ENCODE measurements at regions of chr14 and their contacts with region 1.

Region 1: DNA sequence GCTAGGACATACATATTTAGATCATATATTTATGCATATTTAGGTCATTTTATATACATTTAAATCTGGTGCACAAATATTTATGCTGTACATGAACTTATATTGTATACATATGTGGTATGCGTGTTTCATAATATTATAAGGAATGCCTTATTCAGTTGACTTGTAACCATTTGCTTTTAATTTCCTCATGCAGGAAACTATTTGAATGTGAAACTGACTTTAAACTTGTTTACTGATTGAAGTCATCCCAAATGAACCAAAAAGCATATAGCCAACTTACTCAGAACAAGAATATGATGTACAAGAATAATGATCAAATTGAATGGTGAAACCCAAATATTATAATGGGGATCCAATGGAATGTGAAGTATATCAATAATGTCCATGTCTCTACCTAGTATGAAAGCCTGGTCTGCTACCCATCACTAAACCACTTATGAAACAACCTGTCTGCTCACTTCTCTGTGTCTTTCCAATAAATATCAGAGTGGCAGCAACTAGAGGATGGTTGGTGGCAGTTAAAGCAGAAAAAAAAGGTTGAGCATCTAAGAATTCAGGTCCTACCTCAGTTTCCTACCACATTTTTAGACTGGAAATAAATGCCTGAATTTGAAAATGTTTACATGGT is 38.3 kb downstream of the RPS6KA5 start:
- DNase-seq: no peak
- ATAC-seq: peak in 3 of 4 experiments; percentile 8 to 59 (median 51)
- H3K4me3 ChIP-seq: peak overlapping the region in 1 of 2 donors; percentile 55
- H3K4me3 Mint-ChIP-seq: peak overlapping the region; percentile 72 to 80 (median 76)
- H3K27ac ChIP-seq: peak overlapping the region; percentile 91
- H3K27ac Mint-ChIP-seq: peak overlapping the region; percentile 96 to 97
- H3K4me1 ChIP-seq: peaks cover 4 to 16% of the 10 kb centered on the region in 2 experiments
- H3K4me1 Mint-ChIP-seq: peaks cover 45 to 70% (median 67%) of the 10 kb centered on the region in 3 donors
- H3K27me3 ChIP-seq: no peaks in the 10 kb centered on the region
- H3K27me3 Mint-ChIP-seq: no peaks in the 10 kb centered on the region

Region 2: DNA sequence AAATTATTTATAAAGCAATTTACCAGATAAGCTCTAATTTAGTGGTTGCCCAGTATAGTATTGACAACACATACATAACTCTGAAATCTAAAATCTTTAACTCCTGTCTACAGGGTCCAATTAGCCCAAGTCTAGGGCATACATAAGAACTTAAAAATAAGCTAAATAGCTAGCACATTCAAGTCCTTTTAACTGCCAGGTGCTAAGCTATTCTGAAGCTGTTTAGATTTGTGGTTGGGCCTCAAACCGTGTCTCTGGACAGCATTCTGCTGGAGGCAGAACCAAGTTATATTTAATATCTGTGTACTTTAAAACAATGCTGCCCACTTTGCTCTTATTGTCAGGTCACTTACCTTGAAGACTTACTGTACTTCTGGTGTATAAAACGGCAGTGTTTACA is 19.3 kb after region 1 on chr14:
- CTCF ChIA-PET with region 1: no interaction called
- POLR2A ChIA-PET with region 1: interaction called in 1 of 2 experiments, 18 read pairs
- DNase-seq: no peak
- ATAC-seq: no peak
- H3K4me3 ChIP-seq: no peak overlapping the region
- H3K4me3 Mint-ChIP-seq: no peak overlapping the region
- H3K27ac ChIP-seq: no peak overlapping the region
- H3K27ac Mint-ChIP-seq: no peak overlapping the region
- H3K4me1 ChIP-seq: peaks cover 0 to 5% of the 10 kb centered on the region in 2 experiments
- H3K4me1 Mint-ChIP-seq: peaks cover 54 to 64% (median 62%) of the 10 kb centered on the region in 3 donors
- H3K27me3 ChIP-seq: no peaks in the 10 kb centered on the region
- H3K27me3 Mint-ChIP-seq: no peaks in the 10 kb centered on the region

Region 3: GRCh38 chr14:91286530-91286937 is 264.4 kb after region 1 on chr14:
- CTCF ChIA-PET with region 1: no interaction called
- POLR2A ChIA-PET with region 1: no interaction called
- DNase-seq: peak; percentile 36 to 87 (median 75)
- ATAC-seq: peak; percentile 56 to 78 (median 76)
- H3K4me3 ChIP-seq: no peak overlapping the region
- H3K4me3 Mint-ChIP-seq: no peak overlapping the region
- H3K27ac ChIP-seq: no peak overlapping the region
- H3K27ac Mint-ChIP-seq: peak overlapping the region; percentile 40 to 71
- H3K4me1 ChIP-seq: peaks cover 0 to 9% of the 10 kb centered on the region in 2 experiments
- H3K4me1 Mint-ChIP-seq: peaks cover 12 to 20% (median 14%) of the 10 kb centered on the region in 3 donors
- H3K27me3 ChIP-seq: no peaks in the 10 kb centered on the region
- H3K27me3 Mint-ChIP-seq: no peaks in the 10 kb centered on the region

Region 4: GRCh38 chr14:91732452-91733167 is 710.5 kb after region 1 on chr14:
- CTCF ChIA-PET with region 1: no interaction called
- POLR2A ChIA-PET with region 1: interaction called in 1 of 2 experiments, 13 read pairs
- DNase-seq: no peak
- ATAC-seq: no peak
- H3K4me3 ChIP-seq: no peak overlapping the region
- H3K4me3 Mint-ChIP-seq: no peak overlapping the region
- H3K27ac ChIP-seq: no peak overlapping the region
- H3K27ac Mint-ChIP-seq: no peak overlapping the region
- H3K4me1 ChIP-seq: no peaks in the 10 kb centered on the region
- H3K4me1 Mint-ChIP-seq: peaks cover 0 to 2% (median 0%) of the 10 kb centered on the region in 3 donors
- H3K27me3 ChIP-seq: peaks cover 0 to 3% of the 10 kb centered on the region in 2 experiments
- H3K27me3 Mint-ChIP-seq: peaks cover 0 to 3% of the 10 kb centered on the region in 2 donors